ENCODE measurements at regions of chr16 and their contacts with region 1.

Region 1: GRCh38 chr16:29700253-29700987 is 21.4 kb downstream of the QPRT start:
- DNase-seq: peak; percentile 72 to 78 (median 77)
- H3K4me3 ChIP-seq: no peak overlapping the region
- H3K4me3 Mint-ChIP-seq: peak overlapping the region in 1 of 2 donors; percentile 73
- H3K27ac ChIP-seq: no peak overlapping the region
- H3K27ac Mint-ChIP-seq: peak overlapping the region in 1 of 7 donors; percentile 62
- H3K4me1 ChIP-seq: peaks cover 7 to 19% of the 10 kb centered on the region in 2 donors
- H3K4me1 Mint-ChIP-seq: peaks cover 23% of the 10 kb centered on the region
- H3K27me3 ChIP-seq: peaks cover 0 to 6% of the 10 kb centered on the region in 2 donors
- H3K27me3 Mint-ChIP-seq: peaks cover 17 to 27% (median 25%) of the 10 kb centered on the region in 3 donors
- CTCF ChIP-seq: peak; percentile 92

Region 2: DNA sequence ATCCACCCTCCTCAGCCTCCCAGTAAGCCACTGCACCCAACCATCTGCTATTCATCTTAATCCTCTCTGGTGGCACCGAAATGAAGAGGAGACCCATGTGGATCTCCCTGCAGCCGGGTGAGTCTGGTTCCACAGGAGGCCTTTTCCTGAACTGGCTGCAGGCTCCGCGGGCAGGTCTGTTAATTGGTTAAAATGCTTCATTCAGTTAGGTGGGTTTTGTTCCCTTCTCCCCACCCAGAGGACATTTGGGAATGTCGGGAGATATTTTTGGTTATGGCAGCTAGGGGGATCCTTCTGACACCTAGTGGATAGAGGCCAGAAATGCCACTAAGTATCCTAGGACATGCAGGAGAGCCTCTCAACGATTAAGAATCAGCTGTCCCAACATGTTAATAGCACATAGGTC is 28.7 kb after region 1 on chr16:
- intact Hi-C with region 1: no loop called
- DNase-seq: peak in 2 of 3 donors; percentile 28 to 36
- H3K4me3 ChIP-seq: no peak overlapping the region
- H3K4me3 Mint-ChIP-seq: no peak overlapping the region
- H3K27ac ChIP-seq: no peak overlapping the region
- H3K27ac Mint-ChIP-seq: no peak overlapping the region
- H3K4me1 ChIP-seq: peaks cover 0 to 5% of the 10 kb centered on the region in 2 donors
- H3K4me1 Mint-ChIP-seq: peaks cover 11% of the 10 kb centered on the region
- H3K27me3 ChIP-seq: no peaks in the 10 kb centered on the region
- H3K27me3 Mint-ChIP-seq: peaks cover 0 to 8% (median 6%) of the 10 kb centered on the region in 3 donors
- CTCF ChIP-seq: peak; percentile 74

Region 3: DNA sequence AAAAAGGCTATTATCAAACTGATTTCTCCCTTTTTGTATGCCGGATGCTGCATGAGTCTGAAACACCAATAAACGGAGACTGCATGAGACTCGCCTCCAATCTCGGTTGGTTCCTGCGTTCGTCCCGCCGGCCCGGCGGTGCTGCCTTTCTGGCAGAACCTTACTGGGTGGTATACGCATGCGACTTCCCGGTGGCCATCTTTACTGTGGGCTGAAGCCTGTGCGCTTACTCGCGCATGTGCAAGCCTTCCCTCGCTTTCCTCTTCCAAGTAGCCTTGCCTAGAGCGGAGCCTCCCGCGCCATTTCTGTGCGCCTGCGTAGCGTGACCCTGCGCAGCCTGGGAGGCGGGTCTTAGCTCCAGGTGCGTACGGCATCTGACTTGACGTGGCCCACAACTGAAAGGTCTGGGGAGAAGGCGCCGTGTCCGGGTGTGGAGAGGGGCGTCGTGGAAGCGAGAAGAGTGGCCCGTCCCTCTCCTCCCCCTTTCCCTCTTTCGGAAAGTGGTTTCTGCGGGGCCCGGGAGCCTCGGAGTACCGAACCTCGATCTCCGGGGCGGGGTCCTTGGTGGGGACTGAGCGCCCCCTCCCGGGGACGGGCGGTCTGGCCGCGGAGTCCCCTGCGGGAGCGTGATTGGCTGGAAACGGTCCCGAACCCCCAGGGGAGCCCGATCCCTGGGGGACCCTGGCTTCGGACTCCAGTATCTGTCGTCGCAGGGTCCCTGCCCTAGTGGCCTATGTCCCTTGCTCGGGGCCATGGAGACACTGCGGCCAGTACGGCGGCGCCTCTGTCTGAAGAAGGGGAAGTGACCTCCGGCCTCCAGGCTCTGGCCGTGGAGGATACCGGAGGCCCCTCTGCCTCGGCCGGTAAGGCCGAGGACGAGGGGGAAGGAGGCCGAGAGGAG is 115.6 kb after region 1 on chr16 and contains the start of gene PAGR1:
- intact Hi-C with region 1: loop called in 1 of 2 experiments (anchors 5 kb)
- DNase-seq: peak; percentile 99
- H3K4me3 ChIP-seq: peak within 1 kb of the TSS; percentile 64 to 88 (median 74)
- H3K4me3 Mint-ChIP-seq: peak within 1 kb of the TSS; percentile 95 to 96
- H3K27ac ChIP-seq: peak within 1 kb of the TSS; percentile 73 to 83
- H3K27ac Mint-ChIP-seq: peak within 1 kb of the TSS; percentile 91 to 98 (median 96)
- H3K4me1 ChIP-seq: peaks cover 54 to 75% of the 10 kb centered on the region in 2 donors
- H3K4me1 Mint-ChIP-seq: peaks cover 67% of the 10 kb centered on the region
- H3K27me3 ChIP-seq: peaks cover 5 to 24% of the 10 kb centered on the region in 2 donors
- H3K27me3 Mint-ChIP-seq: peaks cover 21 to 32% (median 31%) of the 10 kb centered on the region in 3 donors
- CTCF ChIP-seq: peak; percentile 92
- polyA plus RNA-seq, gene PAGR1: 12.6 to 43.4 (median 36.3) TPM

Region 4: GRCh38 chr16:29848420-29849297 is 148.2 kb after region 1 on chr16:
- intact Hi-C with region 1: loop called in 1 of 2 experiments (anchors 2 kb)
- DNase-seq: peak; percentile 64 to 70 (median 64)
- H3K4me3 ChIP-seq: no peak overlapping the region
- H3K4me3 Mint-ChIP-seq: no peak overlapping the region
- H3K27ac ChIP-seq: no peak overlapping the region
- H3K27ac Mint-ChIP-seq: no peak overlapping the region
- H3K4me1 ChIP-seq: no peaks in the 10 kb centered on the region
- H3K4me1 Mint-ChIP-seq: no peaks in the 10 kb centered on the region
- H3K27me3 ChIP-seq: no peaks in the 10 kb centered on the region
- H3K27me3 Mint-ChIP-seq: peaks cover 0 to 2% (median 1%) of the 10 kb centered on the region in 3 donors
- CTCF ChIP-seq: peak; percentile 92